Lower leg skin (tissue), 4 donors: ENCODE measurements at regions of chr10 and their contacts with region 1.

Region 1: GRCh38 chr10:85645926-85646711 is 720.5 kb downstream of the GRID1 start:
- DNase-seq: no peak
- H3K4me3 ChIP-seq: no peak overlapping the region
- CTCF ChIP-seq: no peak
- POLR2A ChIP-seq: no peak

Region 2: GRCh38 chr10:83886871-83887270 is 1759.2 kb before region 1 on chr10:
- intact Hi-C with region 1: loop called (anchors 5 kb)
- DNase-seq: no peak
- H3K4me3 ChIP-seq: no peak overlapping the region
- CTCF ChIP-seq: no peak
- POLR2A ChIP-seq: no peak